Psoas muscle (tissue), 8 donors: ENCODE measurements at regions of chr2 and their contacts with region 1.

Region 1: DNA sequence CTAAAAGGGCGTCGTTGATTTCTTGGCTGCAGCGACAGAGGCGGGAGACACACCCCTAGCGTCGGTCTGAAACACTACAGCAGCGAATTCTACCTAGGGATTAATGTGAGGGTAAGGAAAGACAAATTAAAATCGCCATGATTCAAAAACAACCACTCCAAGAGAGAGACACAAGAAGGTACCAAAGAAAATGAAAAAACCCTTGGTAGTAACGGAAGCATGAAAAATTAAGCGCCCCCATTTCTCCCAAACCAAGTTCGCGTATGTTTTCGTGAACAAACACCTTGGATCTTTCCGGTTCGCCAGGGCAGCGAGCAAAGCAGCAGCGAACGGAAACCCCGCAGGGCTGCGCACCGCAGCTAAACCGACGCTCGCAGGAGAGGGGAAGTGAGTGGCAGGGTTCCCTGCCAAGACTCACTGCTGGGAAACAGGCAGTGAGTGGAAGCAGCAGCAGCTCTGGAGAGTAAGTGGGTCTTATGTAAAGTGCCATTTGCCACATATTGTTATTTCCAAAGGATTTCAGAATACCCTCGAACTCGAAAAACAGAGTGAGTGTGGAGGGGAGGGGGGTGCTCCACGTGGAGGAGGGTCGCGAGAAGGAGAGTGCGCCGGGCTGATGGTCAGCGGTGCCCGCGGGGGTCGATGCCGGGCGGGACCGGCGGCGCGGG is 1.0 kb downstream of the PPP3R1 start:
- DNase-seq: peak; percentile 51 to 75
- ATAC-seq: peak; percentile 61 to 81 (median 68)
- H3K4me3 ChIP-seq: peak overlapping the region; percentile 91
- H3K27ac ChIP-seq: peak overlapping the region; percentile 99
- H3K4me1 ChIP-seq: peaks cover 55% of the 10 kb centered on the region
- H3K27me3 ChIP-seq: no peaks in the 10 kb centered on the region
- CTCF ChIP-seq: peak; percentile 69

Region 2: GRCh38 chr2:68157402-68158133 is 93.8 kb before region 1 on chr2 and contains the start of gene PNO1:
- intact Hi-C with region 1: loop called (anchors 2 to 5 kb)
- DNase-seq: peak; percentile 95 to 97
- ATAC-seq: peak; percentile 97 to 99 (median 98)
- H3K4me3 ChIP-seq: peak within 1 kb of the TSS; percentile 99
- H3K27ac ChIP-seq: peak within 1 kb of the TSS; percentile 97
- H3K4me1 ChIP-seq: peaks cover 27% of the 10 kb centered on the region
- H3K27me3 ChIP-seq: no peaks in the 10 kb centered on the region
- CTCF ChIP-seq: no peak
- total RNA-seq, gene PNO1: 13.0 to 26.2 (median 24.6) TPM

Region 3: DNA sequence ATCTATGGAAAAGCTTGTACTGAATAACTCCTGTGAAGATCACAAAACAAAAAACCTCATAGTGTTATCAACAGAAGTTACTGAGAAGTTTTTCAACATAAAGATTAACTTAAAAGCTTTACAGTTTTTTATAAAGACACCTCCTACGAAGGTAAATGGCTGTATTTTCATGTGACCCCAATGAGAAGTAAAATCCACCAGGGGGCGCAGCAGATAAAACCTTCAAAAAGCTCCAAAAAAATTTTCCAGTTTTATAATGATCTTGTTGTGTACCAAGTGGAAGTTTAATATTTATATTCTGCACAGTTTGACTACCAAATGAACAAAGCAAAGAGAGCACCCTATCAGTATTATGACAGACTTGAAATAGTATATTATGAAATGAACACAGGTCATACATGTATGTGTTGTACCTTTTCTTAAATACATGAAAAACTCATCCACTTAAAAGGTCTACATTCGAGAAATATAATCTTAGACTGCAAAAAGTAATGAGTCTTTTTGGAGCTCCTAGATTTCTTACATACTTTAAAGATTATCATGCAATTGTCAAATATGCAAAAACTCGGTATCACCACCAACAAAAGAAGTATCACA is 55.1 kb before region 1 on chr2:
- intact Hi-C with region 1: loop called in 1 of 2 experiments (anchors 5 kb)
- DNase-seq: no peak
- ATAC-seq: peak in 2 of 4 donors; percentile 25 to 44
- H3K4me3 ChIP-seq: no peak overlapping the region
- H3K27ac ChIP-seq: no peak overlapping the region
- H3K4me1 ChIP-seq: peaks cover 66% of the 10 kb centered on the region
- H3K27me3 ChIP-seq: no peaks in the 10 kb centered on the region
- CTCF ChIP-seq: peak; percentile 84

Region 4: GRCh38 chr2:68282811-68283418 is 31.6 kb after region 1 on chr2:
- intact Hi-C with region 1: loop called in 1 of 2 experiments (anchors 2 kb)
- DNase-seq: no peak
- ATAC-seq: peak in 3 of 4 donors; percentile 57 to 76 (median 64)
- H3K4me3 ChIP-seq: no peak overlapping the region
- H3K27ac ChIP-seq: no peak overlapping the region
- H3K4me1 ChIP-seq: peaks cover 37% of the 10 kb centered on the region
- H3K27me3 ChIP-seq: no peaks in the 10 kb centered on the region
- CTCF ChIP-seq: peak; percentile 79

Region 5: GRCh38 chr2:68290901-68291300 is 39.6 kb after region 1 on chr2:
- intact Hi-C with region 1: loop called in 1 of 2 experiments (anchors 5 kb)
- DNase-seq: no peak
- ATAC-seq: peak; percentile 88 to 91 (median 90)
- H3K4me3 ChIP-seq: no peak overlapping the region
- H3K27ac ChIP-seq: peak overlapping the region; percentile 94
- H3K4me1 ChIP-seq: peaks cover 80% of the 10 kb centered on the region
- H3K27me3 ChIP-seq: no peaks in the 10 kb centered on the region
- CTCF ChIP-seq: no peak

Region 6: DNA sequence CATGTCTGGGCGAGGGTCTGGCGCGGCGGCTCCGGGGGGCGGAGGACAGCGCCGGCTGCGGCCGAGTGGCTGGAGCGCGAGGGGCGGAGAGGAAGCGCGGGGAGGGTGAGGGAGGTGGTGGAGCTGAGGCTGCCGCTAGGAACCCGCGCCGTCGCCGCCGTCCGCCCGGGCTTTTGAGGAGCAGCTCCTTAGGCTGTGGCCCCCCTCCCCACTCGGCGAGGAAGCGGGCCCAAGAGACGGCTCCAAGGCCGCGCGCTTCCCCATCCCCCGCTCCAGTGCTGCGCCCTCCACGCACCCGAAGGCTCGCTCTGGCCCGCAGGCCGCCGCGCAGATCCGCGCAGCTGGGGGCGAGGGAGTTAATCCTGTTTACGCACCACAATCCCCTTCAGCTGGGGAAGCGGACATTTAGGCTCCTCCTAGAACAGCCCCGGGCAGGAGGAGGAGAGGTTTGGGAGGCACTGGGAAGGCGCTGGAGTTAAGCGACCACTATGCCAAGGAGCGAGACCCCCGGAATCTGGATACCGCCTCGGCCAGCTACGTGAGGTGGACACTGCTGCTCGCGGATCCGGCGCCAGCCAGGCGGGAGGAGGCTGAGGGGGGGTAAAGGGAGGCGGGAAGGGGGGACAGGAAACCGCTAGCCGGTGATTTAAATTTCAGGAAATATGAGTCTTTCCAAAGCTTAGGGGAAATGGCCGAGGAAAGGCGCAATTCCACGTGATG is 68.2 kb after region 1 on chr2 and contains the start of gene CNRIP1:
- intact Hi-C with region 1: loop called in 1 of 2 experiments (anchors 2 kb)
- DNase-seq: peak; percentile 74 to 82
- ATAC-seq: peak; percentile 72 to 85 (median 76)
- H3K4me3 ChIP-seq: peak within 1 kb of the TSS; percentile 94
- H3K27ac ChIP-seq: peak within 1 kb of the TSS; percentile 83
- H3K4me1 ChIP-seq: peaks cover 14% of the 10 kb centered on the region
- H3K27me3 ChIP-seq: no peaks in the 10 kb centered on the region
- CTCF ChIP-seq: no peak
- total RNA-seq, gene CNRIP1: 4.6 to 11.7 (median 7.2) TPM